Left ventricle myocardium superior (tissue), 1 donor: ENCODE measurements at regions of chr2 and their contacts with region 1.

Region 1: DNA sequence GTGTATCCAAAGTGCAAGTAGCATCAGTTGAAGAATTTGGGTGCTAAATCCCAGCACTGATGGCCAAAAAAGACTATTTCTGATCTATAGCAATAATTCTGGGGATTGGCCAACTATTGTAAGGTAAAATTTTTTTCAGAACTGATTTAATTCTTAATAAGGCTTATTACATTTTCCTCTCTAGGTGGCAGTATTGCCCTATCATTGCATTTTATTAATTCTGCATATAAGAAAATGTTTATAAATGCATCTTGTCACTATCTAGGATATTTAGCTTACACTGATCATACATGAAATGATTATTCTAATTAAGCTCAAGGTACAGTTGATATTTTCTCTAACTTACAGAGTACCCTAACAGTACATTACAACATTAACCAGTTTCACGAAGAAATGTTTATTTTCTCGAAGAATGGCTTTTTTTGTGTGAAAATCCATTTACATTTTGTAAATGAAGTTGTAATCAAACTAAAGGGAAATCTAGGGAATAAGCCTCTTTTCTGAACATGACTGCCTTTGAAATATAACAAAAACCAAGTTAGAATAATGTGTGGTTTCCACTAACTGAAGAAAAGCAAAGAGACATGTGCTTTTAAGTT is 11.0 kb downstream of the TTN start:
- DNase-seq: no peak
- ATAC-seq: no peak

Region 2: GRCh38 chr2:178914259-178914849 is 118.2 kb after region 1 on chr2:
- intact Hi-C with region 1: loop called (anchors 5 kb)
- DNase-seq: peak; percentile 87
- ATAC-seq: peak; percentile 81

Region 3: GRCh38 chr2:179383975-179384374 is 587.8 kb after region 1 on chr2:
- intact Hi-C with region 1: no loop called
- DNase-seq: no peak
- ATAC-seq: no peak